Gastrocnemius medialis (tissue), 4 donors: ENCODE measurements at regions of chr20 and their contacts with region 1.

Region 1: GRCh38 chr20:23200918-23201317 is 114.8 kb upstream of the CD93 start:
- DNase-seq: peak in 1 of 2 donors; percentile 46
- ATAC-seq: peak in 1 of 2 donors; percentile 85
- H3K4me3 ChIP-seq: no peak overlapping the region
- H3K27ac ChIP-seq: no peak overlapping the region
- H3K4me1 ChIP-seq: peaks cover 14 to 15% of the 10 kb centered on the region in 2 donors
- H3K27me3 ChIP-seq: no peaks in the 10 kb centered on the region
- CTCF ChIP-seq: peak; percentile 39 to 63 (median 54)
- POLR2A ChIP-seq: no peak

Region 2: DNA sequence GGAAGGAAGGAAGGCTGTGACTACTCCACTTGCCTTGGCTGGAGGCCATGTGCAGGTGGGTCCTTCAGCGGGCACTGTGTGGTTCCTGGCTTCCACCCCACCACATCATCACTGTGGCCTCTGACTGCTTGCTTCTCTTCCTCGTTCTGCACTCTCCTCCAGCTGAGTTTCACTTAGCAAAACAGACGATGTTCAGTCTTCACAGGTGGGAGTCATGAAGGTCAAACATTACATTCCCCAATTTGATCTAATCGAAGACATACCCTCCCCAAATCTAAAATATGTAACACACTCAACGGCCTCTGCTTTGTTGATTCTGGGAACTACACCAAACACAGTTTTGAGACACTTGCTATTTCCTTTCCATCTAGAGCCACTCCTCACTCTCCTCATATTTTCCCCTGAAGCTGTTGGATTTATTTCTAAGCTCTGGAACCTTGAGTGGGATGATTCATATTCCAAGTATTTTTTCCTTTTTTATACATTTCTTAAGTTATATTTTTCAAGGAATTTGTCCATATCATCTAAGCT is 484.0 kb before region 1 on chr20:
- in situ Hi-C with region 1: loop called in 2 of 4 experiments (anchors 25 kb)
- intact Hi-C with region 1: no loop called
- DNase-seq: no peak
- ATAC-seq: no peak
- H3K4me3 ChIP-seq: no peak overlapping the region
- H3K27ac ChIP-seq: no peak overlapping the region
- H3K4me1 ChIP-seq: no peaks in the 10 kb centered on the region
- H3K27me3 ChIP-seq: no peaks in the 10 kb centered on the region
- CTCF ChIP-seq: no peak
- POLR2A ChIP-seq: no peak